Posterior vena cava (tissue), 2 donors: ENCODE measurements at regions of chr9 and their contacts with region 1.

Region 1: DNA sequence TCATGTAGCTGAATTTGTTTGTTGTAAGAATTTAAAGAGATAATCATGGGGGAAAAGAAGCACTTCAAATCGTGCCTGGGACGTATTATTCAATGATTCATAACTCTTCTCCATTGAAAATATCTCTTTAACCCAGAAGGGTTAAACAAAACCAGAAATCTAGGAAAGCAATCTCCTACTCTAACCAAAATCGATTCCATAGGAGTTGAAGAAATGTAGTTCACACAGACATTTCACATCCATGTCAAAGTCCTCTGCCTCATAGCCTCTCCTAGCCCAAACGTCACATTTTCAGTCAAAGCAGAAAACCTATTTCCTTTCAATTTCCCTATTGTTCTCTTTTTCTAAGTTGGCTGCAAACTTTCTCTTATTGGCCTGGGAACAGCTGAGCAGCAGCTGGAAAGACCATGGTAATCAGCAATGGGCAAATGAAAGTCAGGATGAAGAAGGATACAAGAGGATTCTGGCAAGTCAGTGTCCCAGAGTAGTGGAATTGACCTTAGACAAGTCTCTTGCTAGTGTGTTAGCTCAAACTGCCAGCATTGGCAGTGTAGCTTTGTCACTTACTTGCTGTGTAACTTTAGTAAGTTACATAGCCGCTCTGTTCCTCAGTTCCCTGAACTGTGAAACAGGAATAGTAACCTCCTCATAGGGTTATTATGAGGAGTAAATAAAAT is 3.8 kb downstream of the ALDH1A1 start:
- DNase-seq: no peak

Region 2: DNA sequence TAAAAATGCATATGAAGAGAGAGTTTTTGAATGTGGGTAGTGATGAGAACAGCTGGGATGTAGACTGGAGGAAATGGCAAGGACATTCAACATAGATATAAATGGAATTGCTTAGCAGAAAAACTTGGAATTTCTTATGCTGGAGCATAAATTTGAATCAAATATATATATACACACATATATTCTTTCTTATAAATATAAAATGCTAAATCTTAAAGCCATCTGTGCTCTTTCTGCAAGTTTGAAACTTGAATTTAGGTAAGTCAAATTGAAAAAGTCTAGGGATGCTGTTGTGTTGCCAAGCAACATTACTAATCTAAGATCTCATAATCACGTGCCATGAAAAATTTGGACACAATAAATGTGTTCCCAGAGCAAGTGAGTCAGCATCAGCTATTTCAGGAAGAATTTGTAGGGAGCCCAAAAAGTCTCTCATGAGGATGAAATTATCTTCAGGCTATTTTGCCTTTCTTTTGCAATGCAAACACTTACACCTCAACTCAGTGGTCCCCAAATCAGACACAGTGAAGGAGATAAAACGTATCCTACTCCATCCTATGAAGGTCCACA is 62.2 kb after region 1 on chr9:
- intact Hi-C with region 1: loop called in 1 of 2 experiments (anchors 10 kb)
- DNase-seq: no peak